ENCODE measurements at regions of chr10 and their contacts with region 1.

Region 1: GRCh38 chr10:132836832-132837540 is 51.0 kb upstream of the NKX6-2 start:
- DNase-seq: peak in 2 of 3 donors; percentile 28 to 50
- ATAC-seq: peak; percentile 56
- H3K4me3 ChIP-seq: no peak overlapping the region
- H3K4me1 ChIP-seq: no peaks in the 10 kb centered on the region
- CTCF ChIP-seq: peak; percentile 92

Region 2: GRCh38 chr10:132735923-132736391 is 101.0 kb before region 1 on chr10:
- intact Hi-C with region 1: no loop called
- DNase-seq: no peak
- ATAC-seq: no peak
- H3K4me3 ChIP-seq: no peak overlapping the region
- H3K4me1 ChIP-seq: peaks cover 6% of the 10 kb centered on the region
- CTCF ChIP-seq: no peak

Region 3: DNA sequence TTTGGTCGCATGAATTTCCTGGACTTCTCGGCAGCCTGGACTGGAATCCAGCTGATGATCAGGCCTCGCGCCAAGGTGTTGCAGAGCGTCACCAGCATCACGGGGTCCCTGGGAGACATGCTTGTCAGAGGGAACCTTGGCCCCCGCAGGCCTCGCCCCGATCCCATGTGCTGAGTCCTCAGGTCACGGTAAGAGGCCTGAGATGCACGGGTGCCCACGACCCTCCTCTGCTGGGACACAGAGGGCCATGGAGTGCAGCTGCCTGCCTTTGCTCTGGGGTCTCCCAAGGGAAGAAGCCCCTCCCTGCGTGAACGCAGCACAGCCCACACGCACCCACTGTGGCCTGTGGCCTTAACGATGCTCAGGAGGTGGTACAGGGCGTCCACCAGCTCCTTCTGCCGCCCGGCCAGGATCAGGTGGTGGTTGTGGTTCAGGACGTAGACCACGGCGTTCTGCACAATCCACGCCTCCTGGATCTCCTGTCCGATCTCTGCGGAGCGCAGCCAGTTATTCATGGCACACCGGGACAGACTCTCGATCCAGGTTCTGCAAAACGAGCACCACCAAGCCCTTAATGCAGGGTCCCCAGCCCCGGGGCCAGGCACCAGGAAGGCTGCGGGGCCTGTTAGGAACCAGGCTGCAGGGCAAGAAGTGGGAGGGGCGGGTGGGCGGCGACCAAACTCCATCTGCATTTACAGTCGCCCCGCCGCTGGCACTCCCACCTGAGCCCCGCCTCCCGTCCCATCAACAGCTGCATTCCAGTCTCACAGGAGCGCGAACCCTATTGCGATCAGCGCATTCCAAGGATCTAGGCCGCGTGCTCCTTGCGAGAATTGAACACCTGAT is 76.0 kb after region 1 on chr10:
- intact Hi-C with region 1: no loop called
- DNase-seq: peak in 1 of 3 donors; percentile 61
- ATAC-seq: peak; percentile 36
- H3K4me3 ChIP-seq: no peak overlapping the region
- H3K4me1 ChIP-seq: no peaks in the 10 kb centered on the region
- CTCF ChIP-seq: no peak

Region 4: DNA sequence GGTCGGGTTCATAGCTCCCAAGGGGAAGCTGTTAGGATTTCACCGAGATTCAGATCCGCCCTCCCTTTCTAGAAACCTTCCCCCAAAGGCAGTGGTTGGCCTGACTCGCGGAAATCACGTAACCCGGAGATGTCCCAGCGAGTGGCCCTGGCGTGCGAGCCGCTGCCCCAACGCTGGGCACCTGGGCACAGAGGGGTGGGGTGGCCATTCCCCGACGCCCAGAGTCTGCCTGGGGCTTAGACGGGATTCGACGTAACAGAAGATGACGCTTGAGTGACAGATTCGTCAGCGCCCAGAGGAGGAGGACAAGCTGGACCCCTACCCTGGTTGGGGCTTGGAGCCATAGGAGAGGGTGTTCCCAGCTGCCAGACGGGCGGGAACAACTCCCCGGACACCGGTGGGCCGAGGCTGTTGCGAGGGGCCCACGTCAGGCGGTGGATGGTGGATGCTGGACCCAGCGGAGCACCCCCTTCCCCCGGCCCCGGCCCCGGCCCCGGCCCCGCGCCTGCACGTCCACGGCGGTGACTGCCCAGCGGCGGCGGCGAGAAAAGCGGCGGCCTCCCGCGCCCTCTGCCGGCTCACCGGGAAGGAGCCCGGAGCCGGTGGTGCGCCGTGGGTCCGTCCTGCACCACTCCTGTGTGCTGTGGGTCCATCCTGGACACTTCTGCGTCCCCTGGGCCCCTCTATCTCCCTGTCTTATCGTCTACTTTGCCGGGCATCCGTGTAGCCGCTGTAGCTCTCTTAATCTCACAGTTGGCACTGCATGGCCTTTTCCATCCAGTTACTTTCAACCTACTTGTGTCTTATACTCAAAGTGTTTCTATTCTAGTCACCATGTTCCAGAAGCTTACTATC is 287.6 kb after region 1 on chr10:
- intact Hi-C with region 1: loop called in 1 of 2 experiments (anchors 10 kb)
- DNase-seq: peak; percentile 23 to 49 (median 43)
- ATAC-seq: peak; percentile 65
- H3K4me3 ChIP-seq: no peak overlapping the region
- H3K4me1 ChIP-seq: no peaks in the 10 kb centered on the region
- CTCF ChIP-seq: no peak

Measured in mucosa of descending colon (tissue), 3 donors.